AG04450 (cell line): ENCODE measurements at regions of chr1 and their contacts with region 1.

Region 1: DNA sequence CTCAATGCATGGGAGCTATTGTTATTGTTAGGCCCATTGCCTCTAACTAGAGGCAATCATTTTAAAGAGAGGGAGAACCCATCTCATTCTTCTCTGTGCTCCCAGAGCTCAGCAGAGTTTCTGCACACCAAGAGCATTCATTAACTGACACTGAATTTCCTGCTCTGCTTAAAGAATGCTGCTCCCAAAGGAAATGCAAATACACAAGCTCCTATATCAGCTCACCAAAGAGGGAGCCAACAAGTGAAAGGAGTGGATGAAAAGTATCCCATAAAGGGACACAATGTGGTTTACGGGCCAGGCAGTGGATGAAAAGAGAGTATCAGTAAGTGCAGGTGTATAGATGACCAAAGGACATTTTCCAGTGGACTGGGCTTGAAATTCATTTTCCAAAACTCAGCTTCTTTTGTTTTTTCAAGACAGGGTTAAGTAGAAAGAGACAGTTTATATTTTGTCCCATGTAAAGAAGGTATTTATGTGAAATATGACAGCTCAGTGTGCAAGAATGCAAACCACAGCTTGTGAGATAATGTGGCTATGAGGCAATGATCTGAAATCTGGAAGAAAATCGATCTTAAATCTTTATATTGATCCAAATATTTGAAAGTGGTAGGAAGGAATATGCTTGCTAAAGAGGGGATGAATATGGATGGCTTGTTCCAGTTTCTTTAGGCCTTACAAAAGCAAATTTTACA is 207.7 kb upstream of the CAMK1G start:
- DNase-seq: no peak
- H3K4me3 ChIP-seq: no peak overlapping the region
- H3K27ac ChIP-seq: no peak overlapping the region
- H3K27me3 ChIP-seq: no peaks in the 10 kb centered on the region
- CTCF ChIP-seq: no peak

Region 2: DNA sequence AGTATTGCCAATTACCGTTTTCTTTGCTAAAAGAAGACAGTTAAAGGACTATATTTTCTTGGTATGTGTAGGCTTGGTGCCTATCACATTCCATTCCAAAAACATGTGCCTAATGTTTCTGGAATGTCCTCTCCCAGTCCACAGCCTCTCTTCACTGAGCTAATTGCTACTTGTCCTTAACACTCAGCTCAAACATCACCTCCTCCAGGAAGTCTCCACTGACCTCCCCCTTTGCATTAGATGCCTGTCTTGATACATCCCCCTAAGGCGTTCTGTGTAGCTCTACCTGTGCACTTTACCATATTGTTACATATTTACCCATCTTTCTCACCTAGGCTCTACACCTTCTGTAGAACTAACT is 12.1 kb after region 1 on chr1:
- CTCF ChIA-PET with region 1: interaction called, 10 read pairs
- POLR2A ChIA-PET with region 1: no interaction called
- DNase-seq: no peak
- H3K4me3 ChIP-seq: no peak overlapping the region
- H3K27ac ChIP-seq: no peak overlapping the region
- H3K27me3 ChIP-seq: no peaks in the 10 kb centered on the region
- CTCF ChIP-seq: no peak

Region 3: GRCh38 chr1:209651148-209651547 is 275.3 kb after region 1 on chr1:
- CTCF ChIA-PET with region 1: no interaction called
- POLR2A ChIA-PET with region 1: no interaction called
- DNase-seq: no peak
- H3K4me3 ChIP-seq: no peak overlapping the region
- H3K27ac ChIP-seq: peak overlapping the region; percentile 52
- H3K27me3 ChIP-seq: no peaks in the 10 kb centered on the region
- CTCF ChIP-seq: no peak